PC-9 (cell line): ENCODE measurements at regions of chr6 and their contacts with region 1.

Region 1: DNA sequence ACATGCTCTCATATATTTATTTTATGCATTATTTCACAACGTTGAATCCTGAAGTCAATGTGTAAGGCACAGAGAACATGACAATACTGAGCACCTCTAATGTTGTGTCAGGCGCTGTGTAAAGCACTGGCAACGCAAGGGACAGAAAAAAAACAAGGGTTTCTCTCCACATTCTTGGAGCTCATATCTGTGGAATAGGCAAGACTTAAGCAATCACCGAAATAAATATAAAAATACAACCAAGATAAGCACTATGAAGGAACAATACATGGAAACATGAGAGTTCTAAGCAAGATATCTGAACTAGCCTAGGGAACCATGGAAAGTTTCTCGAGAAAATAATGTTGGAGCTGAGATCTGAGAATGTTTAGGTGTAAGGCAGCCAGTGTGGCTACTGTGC is 1.7 kb upstream of the DST start:
- DNase-seq: no peak
- H3K4me3 ChIP-seq: no peak overlapping the region
- H3K27ac ChIP-seq: no peak overlapping the region
- H3K4me1 ChIP-seq: peaks cover 12% of the 10 kb centered on the region; the same call in 1 of the 2 replicates
- H3K27me3 ChIP-seq: no peaks in the 10 kb centered on the region
- CTCF ChIP-seq: no peak

Region 2: DNA sequence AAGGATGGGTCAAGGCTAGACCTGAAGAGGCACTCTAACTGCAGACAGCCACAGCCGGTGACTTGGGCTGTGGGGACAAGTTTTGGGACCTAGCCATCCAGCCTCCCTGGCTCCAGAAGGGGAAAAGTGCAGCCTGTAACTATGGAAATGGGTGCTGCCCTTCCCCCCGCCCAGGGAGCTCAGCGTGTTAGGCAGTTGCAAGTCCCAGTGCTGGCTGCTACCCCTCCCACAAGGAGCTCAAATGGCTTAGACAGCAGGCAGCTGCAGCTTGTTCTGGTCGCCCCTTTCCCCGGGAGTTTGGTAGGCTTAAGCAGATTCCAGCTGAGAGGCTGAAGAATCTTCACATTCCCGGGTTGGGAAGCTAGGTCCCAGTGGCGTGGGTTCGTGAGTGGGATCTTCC is 1635.2 kb before region 1 on chr6:
- CTCF ChIA-PET with region 1: no interaction called
- POLR2A ChIA-PET with region 1: no interaction called
- intact Hi-C with region 1: no loop called
- DNase-seq: no peak
- H3K4me3 ChIP-seq: no peak overlapping the region
- H3K27ac ChIP-seq: no peak overlapping the region
- H3K4me1 ChIP-seq: no peaks in the 10 kb centered on the region
- H3K27me3 ChIP-seq: no peaks in the 10 kb centered on the region
- CTCF ChIP-seq: no peak

Region 3: GRCh38 chr6:56581296-56581925 is 63.0 kb before region 1 on chr6:
- CTCF ChIA-PET with region 1: no interaction called
- POLR2A ChIA-PET with region 1: no interaction called
- intact Hi-C with region 1: no loop called
- DNase-seq: no peak
- H3K4me3 ChIP-seq: no peak overlapping the region
- H3K27ac ChIP-seq: no peak overlapping the region
- H3K4me1 ChIP-seq: no peaks in the 10 kb centered on the region
- H3K27me3 ChIP-seq: no peaks in the 10 kb centered on the region
- CTCF ChIP-seq: no peak

Region 4: DNA sequence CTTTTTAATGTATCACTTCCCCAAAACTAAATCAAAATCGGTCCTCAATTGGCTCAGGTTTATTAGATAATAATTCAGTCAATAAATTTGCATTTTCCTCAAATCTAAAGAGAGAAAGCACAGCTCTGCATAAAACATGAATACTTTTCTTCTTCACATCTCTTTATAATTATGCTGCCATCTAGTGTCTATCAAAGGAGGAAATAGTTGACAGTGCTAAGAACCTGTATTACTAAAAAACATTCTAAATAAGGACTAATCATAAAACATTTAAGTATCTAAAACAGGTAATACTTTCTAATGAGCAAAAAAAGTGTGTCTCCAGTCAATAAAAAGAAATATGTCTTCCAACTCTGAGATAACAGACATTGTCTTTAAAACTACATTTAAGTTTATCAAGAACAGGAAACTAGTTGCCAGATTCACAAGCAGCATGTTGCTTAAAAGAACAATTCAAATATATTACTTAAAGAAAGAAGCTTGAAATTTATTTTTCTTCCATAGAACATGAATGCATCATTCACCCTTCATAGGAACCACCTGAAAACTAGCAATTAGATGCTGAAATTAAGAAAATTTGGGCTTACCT is 54.8 kb after region 1 on chr6:
- CTCF ChIA-PET with region 1: interaction called, 5 read pairs
- POLR2A ChIA-PET with region 1: interaction called, 10 read pairs
- intact Hi-C with region 1: no loop called
- DNase-seq: no peak
- H3K4me3 ChIP-seq: no peak overlapping the region
- H3K27ac ChIP-seq: no peak overlapping the region
- H3K4me1 ChIP-seq: peaks cover 16% of the 10 kb centered on the region
- H3K27me3 ChIP-seq: no peaks in the 10 kb centered on the region
- CTCF ChIP-seq: peak; percentile 70

Region 5: GRCh38 chr6:56744528-56744927 is 100.2 kb after region 1 on chr6:
- CTCF ChIA-PET with region 1: no interaction called
- POLR2A ChIA-PET with region 1: interaction called, 12 read pairs
- intact Hi-C with region 1: no loop called
- DNase-seq: no peak
- H3K4me3 ChIP-seq: no peak overlapping the region
- H3K27ac ChIP-seq: no peak overlapping the region
- H3K4me1 ChIP-seq: peaks cover 15% of the 10 kb centered on the region; the same call in 1 of the 2 replicates
- H3K27me3 ChIP-seq: no peaks in the 10 kb centered on the region
- CTCF ChIP-seq: no peak